Sigmoid colon (tissue), 7 donors: ENCODE measurements at regions of chr1 and their contacts with region 1.

Region 1: DNA sequence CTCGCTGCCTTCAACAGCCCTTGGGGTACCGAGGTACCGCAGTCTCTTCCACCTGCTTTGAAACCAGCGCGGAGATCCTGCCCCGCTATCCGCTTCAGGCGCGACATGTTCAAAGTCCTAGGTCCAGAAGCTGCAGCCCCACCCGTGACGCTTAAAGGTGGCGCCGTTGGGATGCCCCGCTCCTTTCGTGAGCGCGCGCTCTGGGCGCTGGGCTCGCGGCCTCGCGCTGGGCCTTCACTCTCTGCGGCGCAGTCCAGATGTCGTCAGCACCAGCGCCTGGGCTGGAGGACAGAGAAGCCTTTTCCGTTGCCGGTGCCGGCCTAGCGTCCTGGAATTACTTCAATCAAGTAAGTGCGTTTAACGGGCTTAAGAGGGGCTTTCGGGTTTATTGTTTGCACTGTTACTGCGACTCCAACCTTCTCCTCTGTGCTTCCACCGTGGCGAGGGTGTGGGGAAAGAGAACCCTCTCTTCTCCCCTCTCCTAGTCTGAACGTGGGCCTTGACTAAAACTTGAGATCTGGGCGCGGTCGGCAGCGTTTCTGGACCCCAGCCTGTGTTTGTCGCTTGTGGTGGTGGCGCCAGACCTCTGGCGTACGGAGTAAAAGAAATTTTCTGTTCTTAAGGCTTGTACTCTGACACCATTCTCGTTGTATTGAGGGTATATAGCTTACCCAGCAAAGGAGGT is at the start of gene LRRC40:
- DNase-seq: peak; percentile 95
- H3K4me3 ChIP-seq: peak within 1 kb of the TSS; percentile 60 to 86 (median 69)
- H3K27ac ChIP-seq: peak within 1 kb of the TSS; percentile 85 to 93 (median 90)
- H3K4me1 ChIP-seq: peaks cover 0 to 64% (median 54%) of the 10 kb centered on the region in 4 donors
- H3K27me3 ChIP-seq: no peaks in the 10 kb centered on the region
- CTCF ChIP-seq: no peak
- EP300 ChIP-seq: peak in 1 of 4 donors; percentile 39
- POLR2A ChIP-seq: peak; percentile 52 to 62
- total RNA-seq, gene LRRC40: 14.0 to 20.7 (median 16.6) TPM

Region 2: GRCh38 chr1:69824932-69825331 is 380.6 kb before region 1 on chr1:
- intact Hi-C with region 1: no loop called
- DNase-seq: no peak
- H3K4me3 ChIP-seq: no peak overlapping the region
- H3K27ac ChIP-seq: no peak overlapping the region
- H3K4me1 ChIP-seq: no peaks in the 10 kb centered on the region
- H3K27me3 ChIP-seq: no peaks in the 10 kb centered on the region
- CTCF ChIP-seq: no peak
- EP300 ChIP-seq: no peak
- POLR2A ChIP-seq: no peak

Region 3: DNA sequence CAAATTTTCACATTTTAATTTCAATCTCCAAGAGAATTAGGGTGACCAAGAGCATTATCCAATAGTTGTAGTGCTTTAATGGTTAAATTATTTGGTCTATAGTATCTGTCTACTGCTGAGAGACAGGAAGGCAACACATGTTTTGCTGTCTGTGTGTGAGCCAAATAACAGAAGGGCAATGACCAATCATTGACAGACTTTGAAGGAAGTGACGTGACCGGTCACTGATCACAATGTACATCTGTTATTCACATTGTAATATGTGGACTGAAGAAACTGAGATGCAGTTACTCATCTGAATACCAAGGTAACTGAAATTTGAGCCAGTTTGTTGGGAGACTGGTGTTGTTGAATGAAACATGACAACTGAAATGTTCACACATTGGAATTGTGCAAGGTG is 196.9 kb before region 1 on chr1:
- intact Hi-C with region 1: no loop called
- DNase-seq: no peak
- H3K4me3 ChIP-seq: no peak overlapping the region
- H3K27ac ChIP-seq: no peak overlapping the region
- H3K4me1 ChIP-seq: no peaks in the 10 kb centered on the region
- H3K27me3 ChIP-seq: no peaks in the 10 kb centered on the region
- CTCF ChIP-seq: no peak
- EP300 ChIP-seq: no peak
- POLR2A ChIP-seq: no peak

Region 4: DNA sequence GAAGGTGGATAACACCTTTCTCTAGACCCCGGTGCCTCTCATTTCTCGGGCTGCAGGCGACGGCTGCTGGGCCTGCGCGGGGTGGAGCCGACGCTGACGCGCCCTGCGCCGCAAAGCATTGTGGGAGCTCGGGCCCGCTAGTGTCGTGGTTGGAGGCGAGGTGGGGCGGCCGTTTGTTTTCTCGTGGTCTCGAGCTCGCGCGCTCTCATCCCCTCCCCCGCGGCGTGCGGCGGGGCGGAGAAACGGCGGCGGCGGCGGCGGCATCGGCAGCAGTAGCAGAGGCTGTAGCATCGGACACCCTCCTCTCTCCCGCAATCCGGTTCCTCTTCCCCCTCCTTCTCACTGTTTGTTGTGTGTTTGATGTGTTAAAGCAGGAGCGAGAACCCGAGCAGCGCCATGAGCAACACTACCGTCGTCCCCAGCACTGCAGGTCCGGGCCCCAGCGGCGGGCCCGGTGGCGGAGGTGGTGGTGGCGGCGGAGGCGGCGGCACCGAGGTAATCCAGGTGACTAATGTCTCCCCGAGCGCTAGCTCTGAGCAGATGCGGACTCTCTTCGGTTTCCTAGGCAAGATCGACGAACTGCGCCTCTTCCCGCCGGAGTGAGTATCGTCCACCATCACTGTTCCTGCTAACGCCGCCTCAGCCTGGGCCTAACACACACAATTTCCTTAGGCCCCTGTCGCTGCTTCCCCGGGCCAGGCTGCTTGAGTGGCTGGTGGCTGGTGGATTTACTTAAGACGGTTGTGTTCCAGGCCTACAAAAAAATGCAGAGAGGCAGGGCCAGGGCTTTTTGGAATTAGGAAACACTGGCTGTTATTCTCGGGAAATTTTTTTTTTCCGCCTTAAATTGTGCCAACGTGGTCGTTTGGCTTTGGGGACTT is 15.9 kb after region 1 on chr1 and contains the start of gene SRSF11:
- intact Hi-C with region 1: loop called (anchors 2 kb)
- DNase-seq: peak; percentile 97
- H3K4me3 ChIP-seq: peak within 1 kb of the TSS; percentile 68 to 83 (median 73)
- H3K27ac ChIP-seq: peak within 1 kb of the TSS; percentile 87 to 97 (median 96)
- H3K4me1 ChIP-seq: peaks cover 0 to 53% (median 43%) of the 10 kb centered on the region in 4 donors
- H3K27me3 ChIP-seq: no peaks in the 10 kb centered on the region
- CTCF ChIP-seq: no peak
- EP300 ChIP-seq: peak in 1 of 4 donors; percentile 73
- POLR2A ChIP-seq: peak; percentile 49 to 69
- total RNA-seq, gene SRSF11: 156 to 248 (median 176) TPM

Region 5: GRCh38 chr1:70361727-70362398 is 156.3 kb after region 1 on chr1:
- intact Hi-C with region 1: no loop called
- DNase-seq: no peak
- H3K4me3 ChIP-seq: no peak overlapping the region
- H3K27ac ChIP-seq: no peak overlapping the region
- H3K4me1 ChIP-seq: no peaks in the 10 kb centered on the region
- H3K27me3 ChIP-seq: no peaks in the 10 kb centered on the region
- CTCF ChIP-seq: no peak
- EP300 ChIP-seq: no peak
- POLR2A ChIP-seq: no peak

Region 6: GRCh38 chr1:70410604-70411359 is 205.2 kb after region 1 on chr1 and contains the start of gene CTH:
- intact Hi-C with region 1: loop called (anchors 2 kb)
- DNase-seq: peak; percentile 99
- H3K4me3 ChIP-seq: peak within 1 kb of the TSS; percentile 61 to 74 (median 68)
- H3K27ac ChIP-seq: peak within 1 kb of the TSS; percentile 91 to 96 (median 93)
- H3K4me1 ChIP-seq: peaks cover 0 to 20% (median 10%) of the 10 kb centered on the region in 4 donors
- H3K27me3 ChIP-seq: no peaks in the 10 kb centered on the region
- CTCF ChIP-seq: no peak
- EP300 ChIP-seq: peak in 2 of 4 donors; percentile 12 to 58
- POLR2A ChIP-seq: peak; percentile 74 to 88
- total RNA-seq, gene CTH: 1.1 to 4.6 (median 2.7) TPM